WTC11 (cell line): ENCODE measurements at regions of chr14 and their contacts with region 1.

Region 1: GRCh38 chr14:73058224-73058921 is at the start of gene RBM25:
- DNase-seq: peak; percentile 96
- ATAC-seq: peak; percentile 95
- H3K4me3 Mint-ChIP-seq: no peak within 1 kb of the TSS
- H3K27ac Mint-ChIP-seq: no peak within 1 kb of the TSS
- H3K4me1 Mint-ChIP-seq: peaks cover 49% of the 10 kb centered on the region
- H3K27me3 Mint-ChIP-seq: no peaks in the 10 kb centered on the region
- CTCF ChIP-seq: no peak
- total RNA-seq, gene RBM25: 142 to 147 TPM (median 145 TPM) in 3 replicates

Region 2: GRCh38 chr14:72714094-72714493 is 344.3 kb before region 1 on chr14:
- CTCF ChIA-PET with region 1: no interaction called
- POLR2A ChIA-PET with region 1: no interaction called
- DNase-seq: no peak
- ATAC-seq: no peak
- H3K4me3 Mint-ChIP-seq: no peak overlapping the region
- H3K27ac Mint-ChIP-seq: no peak overlapping the region
- H3K4me1 Mint-ChIP-seq: no peaks in the 10 kb centered on the region
- H3K27me3 Mint-ChIP-seq: no peaks in the 10 kb centered on the region
- CTCF ChIP-seq: no peak

Region 3: DNA sequence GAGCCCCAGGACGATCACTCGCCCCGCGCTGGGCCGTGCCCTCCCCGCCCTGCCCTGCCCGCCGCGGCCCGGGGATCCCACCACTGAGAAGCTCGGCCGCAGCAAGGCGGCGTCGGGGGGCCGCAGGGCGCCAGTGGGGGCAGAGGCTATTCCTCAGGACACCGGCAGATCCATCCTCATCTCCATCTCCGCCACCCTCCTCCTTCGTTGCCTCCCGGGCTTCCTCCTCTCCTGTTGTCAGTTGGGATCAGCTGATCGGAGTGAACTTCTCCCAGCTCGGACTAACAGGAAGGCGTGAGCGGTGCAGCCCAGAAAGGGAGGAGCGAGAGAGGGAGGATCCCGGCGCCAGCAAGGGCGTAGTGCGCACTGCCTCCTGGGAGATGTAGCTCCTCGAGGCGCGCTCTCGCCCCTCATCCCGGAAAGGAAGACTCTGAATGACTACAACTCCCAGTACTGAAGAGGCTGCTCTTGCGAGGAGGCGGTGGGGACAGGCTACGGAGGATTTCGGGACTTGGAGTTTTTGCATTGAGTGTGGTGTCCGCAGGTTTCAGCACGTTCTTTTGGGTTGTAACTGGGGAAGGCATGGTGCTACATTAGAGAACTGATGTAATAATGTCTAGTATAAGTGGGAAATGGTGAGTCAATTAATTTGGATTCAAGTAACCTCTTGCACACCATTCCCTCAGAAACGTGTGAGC is 31.4 kb before region 1 on chr14 and contains the start of gene ZFYVE1:
- CTCF ChIA-PET with region 1: interaction called, 4 read pairs
- POLR2A ChIA-PET with region 1: interaction called, 17 read pairs
- DNase-seq: peak; percentile 98
- ATAC-seq: peak; percentile 99
- H3K4me3 Mint-ChIP-seq: peak within 1 kb of the TSS; percentile 90
- H3K27ac Mint-ChIP-seq: peak within 1 kb of the TSS; percentile 88
- H3K4me1 Mint-ChIP-seq: peaks cover 18% of the 10 kb centered on the region
- H3K27me3 Mint-ChIP-seq: no peaks in the 10 kb centered on the region
- CTCF ChIP-seq: no peak
- total RNA-seq, gene ZFYVE1: 10.8 to 12.8 TPM (median 12.2 TPM) in 3 replicates

Region 4: GRCh38 chr14:73136387-73137225 is 78.2 kb after region 1 on chr14 and contains the start of gene PSEN1:
- CTCF ChIA-PET with region 1: no interaction called
- POLR2A ChIA-PET with region 1: interaction called, 11 read pairs
- DNase-seq: peak; percentile 99
- ATAC-seq: peak; percentile 96
- H3K4me3 Mint-ChIP-seq: peak within 1 kb of the TSS; percentile 85
- H3K27ac Mint-ChIP-seq: peak within 1 kb of the TSS; percentile 93
- H3K4me1 Mint-ChIP-seq: peaks cover 11% of the 10 kb centered on the region
- H3K27me3 Mint-ChIP-seq: peaks cover 16% of the 10 kb centered on the region
- CTCF ChIP-seq: no peak
- total RNA-seq, gene PSEN1: 26.6 to 31.6 TPM (median 27.2 TPM) in 3 replicates